SK-N-SH (cell line): ENCODE measurements at regions of chr3 and their contacts with region 1.

Region 1: GRCh38 chr3:13895155-13896105 is 15.6 kb upstream of the WNT7A start:
- DNase-seq: peak; percentile 98
- H3K4me3 ChIP-seq: peak overlapping the region; percentile 61 to 69
- H3K27ac ChIP-seq: no peak overlapping the region; a peak in 1 of 4 replicates
- H3K4me1 ChIP-seq: peaks cover 7 to 12% of the 10 kb centered on the region in 2 experiments; a peak in 3 of 4 replicates
- H3K27me3 ChIP-seq: no peaks in the 10 kb centered on the region
- CTCF ChIP-seq: no peak
- EP300 ChIP-seq: no peak
- RAD21 ChIP-seq: no peak

Region 2: GRCh38 chr3:13657660-13658435 is 237.6 kb before region 1 on chr3:
- CTCF ChIA-PET with region 1: interaction called, 979 read pairs
- POLR2A ChIA-PET with region 1: no interaction called
- DNase-seq: peak; percentile 92
- H3K4me3 ChIP-seq: peak overlapping the region in 1 of 2 experiments; percentile 26; a peak in 1 of 4 replicates
- H3K27ac ChIP-seq: no peak overlapping the region
- H3K4me1 ChIP-seq: peaks cover 0 to 9% of the 10 kb centered on the region in 2 experiments; a peak in 1 of 4 replicates
- H3K27me3 ChIP-seq: no peaks in the 10 kb centered on the region
- CTCF ChIP-seq: peak; percentile 73
- EP300 ChIP-seq: no peak
- RAD21 ChIP-seq: peak; percentile 85

Region 3: DNA sequence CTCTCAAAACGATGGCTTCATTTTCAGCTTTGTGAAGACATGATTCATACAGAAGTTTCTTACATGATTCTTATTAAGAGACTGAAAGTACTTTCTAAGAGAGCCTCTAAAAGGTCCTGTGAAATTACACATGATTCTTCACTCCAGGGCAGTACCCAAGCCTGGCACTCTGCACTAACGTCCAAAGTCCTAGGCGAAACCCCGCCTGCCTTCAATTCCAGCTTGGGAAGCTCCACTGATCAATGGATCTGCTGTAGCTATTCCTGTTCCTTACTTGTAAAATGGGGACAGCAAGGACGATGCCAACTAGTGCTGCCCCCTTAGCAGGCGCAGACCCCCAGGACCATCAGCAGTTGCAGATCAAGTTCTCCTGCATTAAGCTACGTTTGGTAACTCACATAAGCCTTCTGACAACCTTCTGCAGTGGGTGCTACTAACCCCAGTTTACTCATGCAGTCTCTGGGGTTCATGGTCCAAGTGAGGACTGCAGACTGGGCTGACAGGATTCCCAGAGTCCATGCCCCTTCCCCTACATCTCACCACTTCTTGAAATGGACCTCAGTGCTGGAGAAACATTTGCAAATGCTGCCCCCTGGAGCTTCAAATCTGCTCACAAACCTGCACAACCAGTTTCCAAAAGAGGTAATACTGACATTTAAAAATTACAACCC is 218.7 kb after region 1 on chr3:
- CTCF ChIA-PET with region 1: interaction called, 48 read pairs
- POLR2A ChIA-PET with region 1: no interaction called
- DNase-seq: no peak
- H3K4me3 ChIP-seq: no peak overlapping the region
- H3K27ac ChIP-seq: no peak overlapping the region
- H3K4me1 ChIP-seq: no peaks in the 10 kb centered on the region
- H3K27me3 ChIP-seq: no peaks in the 10 kb centered on the region
- CTCF ChIP-seq: peak; percentile 34
- EP300 ChIP-seq: no peak
- RAD21 ChIP-seq: peak; percentile 40

Region 4: DNA sequence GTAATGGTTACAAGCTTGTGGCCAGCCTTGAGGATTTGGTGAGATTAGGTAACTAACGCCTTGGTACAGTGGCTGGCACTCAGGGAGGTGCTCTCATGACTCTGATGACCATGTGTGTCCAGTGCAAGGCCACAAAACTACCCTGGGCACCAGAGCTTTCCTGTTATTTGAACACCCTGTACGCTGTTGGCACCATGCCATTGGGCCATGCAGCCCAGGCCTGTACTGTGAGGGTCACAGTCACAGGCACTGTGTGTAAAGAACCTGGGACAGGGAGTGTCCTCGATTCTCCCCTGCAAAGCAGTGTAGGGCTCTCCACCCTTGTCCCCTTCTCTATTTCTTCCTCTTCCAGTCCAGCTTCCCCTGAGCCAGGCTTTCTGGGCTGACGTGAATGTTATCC is 235.7 kb after region 1 on chr3:
- CTCF ChIA-PET with region 1: interaction called, 37 read pairs
- POLR2A ChIA-PET with region 1: interaction called, 10 read pairs
- DNase-seq: no peak
- H3K4me3 ChIP-seq: no peak overlapping the region
- H3K27ac ChIP-seq: no peak overlapping the region
- H3K4me1 ChIP-seq: peaks cover 9 to 11% of the 10 kb centered on the region in 2 experiments
- H3K27me3 ChIP-seq: no peaks in the 10 kb centered on the region
- CTCF ChIP-seq: no peak
- EP300 ChIP-seq: no peak
- RAD21 ChIP-seq: no peak

Region 5: GRCh38 chr3:14178247-14179113 is 283.1 kb after region 1 on chr3 and contains the starts of genes LSM3 and XPC:
- CTCF ChIA-PET with region 1: interaction called, 12 read pairs
- POLR2A ChIA-PET with region 1: no interaction called
- DNase-seq: peak; percentile 95
- H3K4me3 ChIP-seq: peak within 1 kb of the TSS; percentile 90 to 98
- H3K27ac ChIP-seq: peak within 1 kb of the TSS; percentile 90 to 94
- H3K4me1 ChIP-seq: peaks cover 17 to 34% of the 10 kb centered on the region in 2 experiments; a peak in 3 of 4 replicates
- H3K27me3 ChIP-seq: no peaks in the 10 kb centered on the region
- CTCF ChIP-seq: no peak
- EP300 ChIP-seq: no peak; a peak in 2 of 4 replicates
- RAD21 ChIP-seq: no peak
- polyA plus RNA-seq, gene LSM3: 5.1 and 6.4 TPM in 2 replicates
- polyA plus RNA-seq, gene XPC: 50.0 and 52.0 TPM in 2 replicates

Region 6: DNA sequence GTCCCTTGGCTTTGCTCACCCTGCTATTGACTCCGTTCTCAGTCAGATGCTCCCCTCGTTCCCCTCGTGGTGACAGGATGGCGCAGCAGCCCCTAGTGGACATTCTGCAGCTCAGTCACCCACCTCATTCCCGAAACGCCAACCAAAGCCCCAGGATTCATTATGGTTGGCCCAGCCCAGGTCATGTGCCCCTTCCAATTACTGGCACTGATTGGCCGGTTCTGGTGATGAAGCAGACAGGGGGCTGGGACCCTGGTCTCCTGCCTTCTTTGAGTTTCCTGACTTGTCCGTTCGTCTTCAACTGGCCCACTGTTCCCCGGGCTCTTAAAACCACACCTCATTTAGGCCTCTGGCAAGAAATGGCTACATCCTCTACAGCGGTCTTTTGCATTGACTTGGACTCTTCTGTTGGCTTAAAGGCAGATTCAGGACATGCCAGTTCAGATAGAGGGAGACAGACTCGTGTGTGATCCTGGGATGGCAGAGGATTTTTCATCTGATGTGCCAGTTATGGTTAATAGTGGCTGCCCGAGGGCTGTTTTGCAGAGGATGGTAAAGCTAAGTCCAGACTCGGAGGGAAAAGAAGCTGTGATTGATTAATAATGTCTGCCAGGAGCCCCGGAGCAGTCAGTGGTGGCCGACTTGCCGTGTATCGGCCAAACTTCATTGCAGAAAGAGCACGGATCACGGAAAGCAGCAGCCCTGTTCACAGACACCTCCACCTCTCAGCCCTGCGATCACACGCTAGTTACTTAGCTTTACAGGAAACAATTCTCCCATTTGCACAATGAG is 321.0 kb after region 1 on chr3:
- CTCF ChIA-PET with region 1: interaction called, 12 read pairs
- POLR2A ChIA-PET with region 1: no interaction called
- DNase-seq: peak; percentile 85
- H3K4me3 ChIP-seq: peak overlapping the region; percentile 50 to 55
- H3K27ac ChIP-seq: peak overlapping the region; percentile 52 to 96
- H3K4me1 ChIP-seq: peaks cover 0 to 4% of the 10 kb centered on the region in 2 experiments; a peak in 1 of 4 replicates
- H3K27me3 ChIP-seq: no peaks in the 10 kb centered on the region
- CTCF ChIP-seq: peak; percentile 60
- EP300 ChIP-seq: no peak; a peak in 1 of 4 replicates
- RAD21 ChIP-seq: peak; percentile 69

Region 7: DNA sequence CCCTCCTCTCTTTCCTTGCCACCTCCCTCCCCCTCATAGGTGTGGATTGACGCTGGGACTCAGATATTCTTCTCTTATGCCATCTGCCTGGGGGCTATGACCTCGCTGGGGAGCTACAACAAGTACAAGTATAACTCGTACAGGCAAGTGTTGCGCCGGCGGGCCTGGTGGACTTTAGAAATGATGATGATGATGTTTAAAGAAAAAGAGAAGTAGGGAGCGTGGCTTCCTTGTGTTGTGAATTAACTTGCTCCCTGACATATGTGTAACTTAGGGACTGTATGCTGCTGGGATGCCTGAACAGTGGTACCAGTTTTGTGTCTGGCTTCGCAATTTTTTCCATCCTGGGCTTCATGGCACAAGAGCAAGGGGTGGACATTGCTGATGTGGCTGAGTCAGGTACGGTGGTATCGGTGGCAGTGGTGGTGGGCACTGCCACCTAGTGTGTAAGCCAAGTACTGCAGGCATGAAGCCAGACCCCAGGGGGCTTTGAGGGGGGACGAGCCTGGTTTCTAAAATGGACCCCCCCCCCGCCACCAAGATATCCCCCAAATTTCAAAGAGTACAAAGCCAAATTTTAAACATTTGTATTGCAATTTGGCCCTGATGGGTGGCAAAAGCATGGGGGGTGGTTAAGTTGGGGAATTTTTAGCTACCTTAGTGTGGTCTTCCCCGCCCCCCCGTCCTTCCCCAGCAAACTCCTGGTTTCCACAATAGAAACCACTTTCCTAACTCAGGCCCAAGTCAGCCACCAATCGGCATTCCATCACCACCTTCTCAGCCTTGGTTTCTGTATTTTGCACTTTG is 572.6 kb after region 1 on chr3:
- CTCF ChIA-PET with region 1: interaction called, 12 read pairs
- POLR2A ChIA-PET with region 1: no interaction called
- DNase-seq: peak; percentile 92
- H3K4me3 ChIP-seq: peak overlapping the region in 1 of 2 experiments; percentile 23; a peak in 1 of 4 replicates
- H3K27ac ChIP-seq: no peak overlapping the region
- H3K4me1 ChIP-seq: peaks cover 4 to 19% of the 10 kb centered on the region in 2 experiments; a peak in 3 of 4 replicates
- H3K27me3 ChIP-seq: no peaks in the 10 kb centered on the region
- CTCF ChIP-seq: peak; percentile 95
- EP300 ChIP-seq: no peak
- RAD21 ChIP-seq: peak; percentile 93